Endothelial cell of umbilical vein (primary cell): ENCODE measurements at regions of chr4 and their contacts with region 1.

Region 1: GRCh38 chr4:118865091-118865708 is 23.5 kb upstream of the SYNPO2 start:
- DNase-seq: peak; percentile 64
- H3K4me3 ChIP-seq: no peak overlapping the region
- H3K27ac ChIP-seq: no peak overlapping the region
- H3K4me1 ChIP-seq: peaks cover 13% of the 10 kb centered on the region
- H3K27me3 ChIP-seq: no peaks in the 10 kb centered on the region
- CTCF ChIP-seq: peak; percentile 58 to 77
- POLR2A ChIP-seq: no peak

Region 2: DNA sequence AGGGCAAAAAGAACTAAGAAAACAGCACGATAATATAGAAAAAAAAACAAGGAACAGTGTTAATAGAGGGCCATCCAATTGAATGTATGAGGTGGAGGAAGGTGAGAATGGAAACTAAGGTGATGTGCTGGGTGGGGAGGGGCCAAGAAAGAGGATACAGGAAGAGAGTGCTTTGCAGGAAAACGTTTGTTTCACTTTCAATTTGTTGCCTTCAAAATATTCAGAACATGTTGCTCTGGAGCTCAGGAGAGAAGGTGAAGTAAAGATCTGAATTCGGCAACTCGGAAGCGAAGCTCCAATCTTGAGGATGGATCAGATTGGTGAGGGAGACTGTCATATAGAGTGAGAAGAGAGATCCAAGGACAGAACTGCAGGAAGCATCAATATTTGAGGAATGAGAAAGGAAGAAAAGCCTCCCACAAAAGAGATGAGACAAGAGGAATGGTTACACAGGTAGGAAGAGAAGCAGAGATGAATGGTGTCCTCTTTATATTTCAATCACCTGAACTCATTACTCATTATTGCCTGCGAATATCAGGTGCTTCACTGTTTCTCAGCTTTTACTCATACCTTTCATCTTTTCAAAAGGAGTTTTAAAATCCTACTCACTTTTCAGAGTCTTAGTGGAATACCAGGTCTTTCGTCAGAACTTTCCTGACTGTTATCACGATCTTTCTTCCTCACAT is 14.6 kb before region 1 on chr4:
- CTCF ChIA-PET with region 1: interaction called, 35 read pairs
- POLR2A ChIA-PET with region 1: interaction called, 4 read pairs
- dilution Hi-C with region 1: no loop called
- intact Hi-C with region 1: no loop called
- DNase-seq: peak; percentile 44
- H3K4me3 ChIP-seq: peak overlapping the region; percentile 33 to 63 (median 41)
- H3K27ac ChIP-seq: no peak overlapping the region
- H3K4me1 ChIP-seq: peaks cover 6% of the 10 kb centered on the region
- H3K27me3 ChIP-seq: no peaks in the 10 kb centered on the region
- CTCF ChIP-seq: no peak
- POLR2A ChIP-seq: no peak